Right ventricle myocardium inferior (tissue), 1 donor: ENCODE measurements at regions of chr9 and their contacts with region 1.

Region 1: DNA sequence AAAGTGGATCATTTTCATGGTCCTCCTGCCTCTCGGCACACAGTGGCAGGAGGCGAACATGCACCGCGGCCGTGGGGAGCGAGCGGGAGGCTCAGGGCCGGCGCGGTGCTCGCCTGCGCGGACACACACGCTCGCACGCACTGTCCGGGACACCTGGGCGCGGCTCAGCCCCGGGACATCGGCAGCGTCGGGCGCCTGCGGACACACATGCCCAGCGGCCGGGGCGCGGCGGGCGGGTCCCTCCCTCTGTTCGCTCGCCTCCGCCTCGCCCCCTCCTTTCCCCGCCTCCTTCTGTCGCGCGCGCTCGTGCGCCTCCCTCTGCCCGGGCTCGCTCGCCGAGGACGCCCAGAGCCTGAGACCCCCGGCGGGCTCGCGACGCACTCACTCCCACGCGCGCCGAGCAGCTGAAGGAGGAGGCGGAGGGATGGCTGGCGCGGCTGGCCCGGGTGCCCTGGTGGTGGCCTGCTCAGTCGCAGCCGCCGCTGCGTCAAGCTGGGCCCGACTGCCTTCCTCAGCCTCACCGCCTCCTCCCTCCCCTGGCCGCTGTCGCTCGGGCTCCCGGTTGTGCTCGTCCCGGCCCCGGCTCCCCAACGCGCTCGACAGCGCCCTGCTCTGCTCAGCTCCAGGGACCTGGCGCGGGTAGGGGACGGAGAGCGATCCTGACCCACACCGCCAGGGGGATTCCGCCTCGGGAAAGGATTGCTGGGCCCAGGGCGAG is at the start of gene FRMD3:
- DNase-seq: peak; percentile 94
- ATAC-seq: peak; percentile 96
- total RNA-seq, gene FRMD3: 98.9 TPM

Region 2: DNA sequence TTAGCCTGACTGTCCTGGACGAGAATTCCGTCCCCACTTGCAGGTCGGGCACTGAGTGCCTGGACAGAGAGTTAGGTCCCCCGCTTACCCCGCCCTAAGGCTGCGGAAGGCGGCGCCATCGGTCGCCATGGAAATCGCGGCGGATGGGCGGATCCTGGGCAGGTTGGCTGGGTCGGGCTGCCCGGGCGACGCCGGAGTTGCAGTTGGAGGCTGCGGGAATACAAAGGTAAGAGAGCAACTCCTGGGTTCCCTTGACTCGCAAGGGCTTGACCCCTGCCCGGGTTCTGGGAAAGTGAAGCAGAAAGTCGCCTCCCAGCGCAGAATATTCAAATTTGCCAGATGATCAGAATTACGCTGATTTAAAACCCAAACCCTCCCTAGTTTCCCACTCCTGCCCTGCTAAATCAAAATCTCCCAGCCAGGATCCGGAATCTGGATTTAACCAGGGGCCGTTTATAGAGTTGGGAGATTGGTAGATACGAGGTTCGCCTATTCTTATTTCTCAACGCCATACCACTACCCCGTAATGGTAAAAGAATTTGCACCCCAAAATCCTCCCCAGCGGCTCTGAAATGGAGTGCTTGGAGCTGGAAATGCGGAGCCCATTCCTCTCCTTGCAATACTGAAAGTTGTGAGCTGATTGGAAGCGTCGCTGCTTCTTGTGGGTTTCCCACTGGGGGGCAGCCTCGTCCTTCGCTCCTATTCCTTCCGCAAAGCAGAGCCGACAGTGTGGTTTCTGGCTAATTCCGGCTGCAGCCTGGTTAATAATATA is 319.0 kb before region 1 on chr9:
- intact Hi-C with region 1: loop called (anchors 2 kb)
- DNase-seq: peak; percentile 86
- ATAC-seq: peak; percentile 97

Region 3: DNA sequence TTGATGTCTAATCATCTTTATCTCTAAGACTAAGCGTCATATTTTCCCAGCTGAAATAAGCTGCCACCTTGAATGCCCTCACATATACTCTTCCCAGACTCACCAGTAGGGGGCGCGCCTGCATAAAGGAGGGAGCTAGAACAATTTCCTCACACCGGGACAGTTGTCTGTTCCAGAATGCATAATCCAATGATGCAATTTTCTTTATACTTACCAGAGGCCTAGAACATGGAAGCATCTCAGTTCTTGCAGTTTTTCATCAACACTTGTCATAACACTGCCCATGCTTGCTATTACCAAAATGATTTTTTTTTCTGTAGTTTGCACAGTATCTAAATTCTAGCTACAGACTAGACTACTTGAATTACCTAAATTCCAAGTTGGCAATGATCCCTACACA is 204.0 kb before region 1 on chr9:
- intact Hi-C with region 1: loop called (anchors 2 kb)
- DNase-seq: peak; percentile 91
- ATAC-seq: peak; percentile 94

Region 4: GRCh38 chr9:83432104-83432639 is 106.2 kb before region 1 on chr9:
- intact Hi-C with region 1: loop called (anchors 5 kb)
- DNase-seq: peak; percentile 85
- ATAC-seq: peak; percentile 81

Region 5: DNA sequence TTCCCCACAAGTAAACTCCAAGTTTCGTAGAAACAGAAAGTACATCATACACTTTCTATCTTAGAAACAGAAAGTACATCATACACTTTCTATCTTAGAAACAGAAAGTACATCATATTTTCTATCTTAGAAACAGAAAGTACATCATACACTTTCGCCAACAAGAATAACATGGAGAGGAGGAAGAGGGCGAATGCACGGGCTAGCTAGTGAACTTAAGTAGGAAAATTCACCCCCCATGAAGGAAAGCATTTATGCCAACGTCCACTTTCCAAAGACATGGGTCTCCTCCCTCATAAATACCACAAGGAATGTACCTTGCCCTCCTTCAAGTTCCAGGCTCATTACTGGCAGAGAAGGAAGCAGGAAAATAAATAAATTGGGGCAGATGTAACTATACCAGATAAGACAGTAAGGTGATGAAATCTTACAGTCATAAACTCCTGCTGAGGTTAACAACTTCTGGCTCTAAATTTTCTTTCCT is 64.8 kb before region 1 on chr9:
- intact Hi-C with region 1: loop called (anchors 5 kb)
- DNase-seq: no peak
- ATAC-seq: peak; percentile 16